ENCODE measurements at regions of chr2 and their contacts with region 1.

Region 1: DNA sequence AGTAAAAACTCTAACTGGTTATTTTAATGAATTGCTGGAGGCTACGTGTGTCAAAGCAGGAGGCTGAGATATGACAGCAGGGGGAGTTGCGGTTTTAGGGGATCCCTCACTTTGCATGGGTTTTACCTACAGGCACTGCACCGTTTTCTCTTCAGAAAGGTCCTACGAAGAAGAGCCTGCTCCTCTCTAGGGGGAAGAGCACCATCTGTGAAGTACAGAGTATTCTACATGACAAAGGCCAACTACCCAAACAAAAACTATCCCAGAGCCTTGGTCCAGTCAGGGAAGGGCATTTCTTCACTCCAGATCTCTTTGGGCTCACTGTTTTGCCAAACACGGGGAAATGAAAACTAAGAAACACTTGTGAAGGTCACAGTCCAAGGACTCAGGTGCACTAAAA is 696.7 kb upstream of the SOX11 start:
- DNase-seq: no peak
- H3K4me3 ChIP-seq: no peak overlapping the region
- H3K27ac ChIP-seq: no peak overlapping the region
- H3K4me1 ChIP-seq: no peaks in the 10 kb centered on the region
- H3K27me3 ChIP-seq: no peaks in the 10 kb centered on the region
- CTCF ChIP-seq: no peak
- POLR2A ChIP-seq: no peak

Region 2: DNA sequence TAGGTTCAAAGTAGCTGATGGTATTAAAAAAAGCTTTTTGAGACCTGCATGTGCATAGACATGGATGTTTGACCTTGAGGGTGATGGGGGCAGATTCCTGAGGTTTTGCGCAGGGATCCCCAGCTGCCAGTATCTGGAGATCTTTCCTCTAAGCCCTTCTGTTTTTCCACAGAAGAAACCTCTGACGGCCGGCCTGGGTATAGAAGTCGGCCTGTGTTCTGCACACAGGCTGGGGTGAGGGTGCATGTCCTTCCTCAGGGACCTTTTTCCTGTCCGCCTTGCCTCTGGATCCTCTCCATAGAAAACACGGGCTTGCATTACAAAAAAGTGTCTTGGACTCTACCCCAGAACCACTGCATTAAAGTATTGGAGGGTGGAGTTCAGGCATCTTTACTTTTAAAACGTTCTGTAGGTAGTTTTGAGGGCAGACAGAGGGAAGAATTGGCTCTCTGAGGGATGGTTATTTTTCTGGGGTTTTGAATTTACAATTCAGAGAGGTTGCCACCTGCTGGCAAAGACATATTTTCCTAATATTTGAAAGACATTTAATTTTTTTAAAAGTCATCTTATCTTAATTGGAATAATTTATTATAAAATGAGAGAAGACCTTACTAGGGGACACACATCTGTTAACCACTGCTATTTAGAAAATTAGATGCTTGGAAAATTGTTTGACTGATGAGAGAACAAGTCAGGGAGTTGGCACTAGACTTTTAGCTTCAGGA is 941.5 kb before region 1 on chr2:
- intact Hi-C with region 1: no loop called
- DNase-seq: no peak
- H3K4me3 ChIP-seq: no peak overlapping the region
- H3K27ac ChIP-seq: no peak overlapping the region
- H3K4me1 ChIP-seq: no peaks in the 10 kb centered on the region
- H3K27me3 ChIP-seq: no peaks in the 10 kb centered on the region
- CTCF ChIP-seq: no peak
- POLR2A ChIP-seq: no peak

Region 3: DNA sequence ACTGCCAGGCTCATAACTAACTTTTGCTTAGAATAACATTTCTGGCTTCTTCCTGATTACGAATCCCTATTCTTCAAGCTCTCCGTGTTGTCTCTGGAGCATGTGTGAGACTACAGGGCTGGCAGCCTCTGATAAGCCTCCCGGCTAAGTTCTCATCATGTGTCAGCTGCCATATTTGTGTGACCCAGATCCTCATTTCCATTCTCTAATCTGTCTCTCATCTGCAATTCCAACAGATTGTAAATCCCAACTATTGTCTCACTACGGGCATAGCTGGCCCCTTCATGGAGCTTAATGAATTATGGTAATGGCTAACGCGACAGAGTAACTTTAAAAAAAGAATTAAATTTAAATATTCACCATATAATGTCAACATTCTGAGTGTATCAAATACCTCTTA is 1704.9 kb after region 1 on chr2:
- intact Hi-C with region 1: no loop called
- DNase-seq: no peak
- H3K4me3 ChIP-seq: no peak overlapping the region
- H3K27ac ChIP-seq: no peak overlapping the region
- H3K4me1 ChIP-seq: no peaks in the 10 kb centered on the region
- H3K27me3 ChIP-seq: no peaks in the 10 kb centered on the region
- CTCF ChIP-seq: no peak
- POLR2A ChIP-seq: no peak

Region 4: DNA sequence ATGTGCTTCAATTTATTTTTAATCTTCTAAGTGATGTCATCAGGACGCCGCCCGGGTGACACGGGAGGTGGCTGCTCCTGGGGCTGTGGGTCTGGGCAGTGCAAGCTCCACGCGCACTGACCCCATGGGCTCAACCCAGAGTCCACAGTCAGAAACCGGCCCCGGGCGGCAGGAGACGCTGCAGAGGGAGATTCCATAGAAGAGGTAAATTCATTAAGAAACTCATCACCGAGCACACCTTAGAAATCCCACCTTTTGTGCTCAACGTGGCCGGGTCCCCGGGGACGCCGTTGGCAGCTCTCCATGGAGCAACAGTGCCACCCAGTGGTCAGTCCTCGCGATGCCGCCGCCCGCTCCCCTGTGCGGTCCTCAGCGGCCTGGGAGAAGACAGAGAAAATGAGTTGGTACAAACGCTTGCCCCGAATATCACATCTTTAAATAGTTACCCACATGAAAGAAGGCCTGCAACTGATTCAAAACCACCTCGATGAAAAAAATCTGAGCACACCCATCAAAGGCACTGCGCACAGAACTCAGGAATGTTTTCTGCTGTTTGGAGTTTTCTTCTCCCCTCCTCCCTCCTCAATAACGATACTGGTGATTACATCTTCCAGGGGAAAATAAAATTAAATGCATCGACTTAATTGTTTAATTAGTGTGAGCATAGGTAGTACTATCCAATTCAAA is 1777.7 kb after region 1 on chr2:
- intact Hi-C with region 1: loop called (anchors 5 kb)
- DNase-seq: no peak
- H3K4me3 ChIP-seq: peak overlapping the region in 1 of 2 donors; percentile 15
- H3K27ac ChIP-seq: no peak overlapping the region
- H3K4me1 ChIP-seq: no peaks in the 10 kb centered on the region
- H3K27me3 ChIP-seq: no peaks in the 10 kb centered on the region
- CTCF ChIP-seq: peak; percentile 66 to 92 (median 79)
- POLR2A ChIP-seq: no peak